ENCODE measurements at regions of chr18 and their contacts with region 1.

Region 1: DNA sequence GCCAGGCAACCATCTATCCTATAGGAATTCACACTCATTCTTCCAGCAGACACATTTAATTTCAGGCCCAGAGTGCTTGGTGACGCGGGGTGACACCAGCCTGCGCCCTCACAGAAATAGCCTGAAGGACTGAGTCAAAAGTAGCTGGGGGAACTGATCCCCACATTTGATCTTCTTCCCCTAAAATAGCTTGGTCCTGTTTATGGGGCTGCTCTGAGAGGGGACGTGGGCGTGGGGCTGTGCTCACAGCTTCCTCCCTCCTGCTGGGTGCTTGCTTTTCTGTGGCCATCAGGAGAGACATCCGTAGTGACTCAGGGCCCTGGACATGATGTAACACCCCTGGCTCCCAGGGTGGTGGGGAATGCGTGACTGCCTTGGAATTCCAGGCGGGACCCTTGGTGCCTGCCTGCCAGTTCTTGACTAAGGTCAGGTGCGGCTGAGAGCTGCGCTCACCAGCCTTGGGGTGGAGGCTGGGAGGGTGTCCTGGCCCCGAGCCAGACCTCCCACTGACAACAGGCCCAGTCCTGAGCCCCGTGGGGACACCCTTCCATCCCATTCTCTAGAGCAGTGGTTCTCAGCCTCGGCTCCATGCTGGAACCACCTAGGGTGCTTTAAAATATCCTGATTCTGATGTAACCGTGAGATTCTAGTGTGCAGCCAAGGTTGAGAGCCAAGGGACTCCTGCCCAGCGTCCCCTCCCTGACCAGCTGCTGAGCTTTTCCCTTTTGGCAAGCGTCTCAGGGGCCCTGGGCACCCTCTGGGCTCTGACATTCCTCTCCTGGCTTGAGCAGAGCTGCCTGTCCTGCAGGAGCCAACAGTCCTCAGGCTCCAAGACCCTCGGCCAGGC is 47.4 kb upstream of the SMAD7 start:
- DNase-seq: peak; percentile 97
- H3K4me3 Mint-ChIP-seq: peak overlapping the region; percentile 13
- H3K27ac Mint-ChIP-seq: peak overlapping the region; percentile 83
- H3K4me1 Mint-ChIP-seq: peaks cover 31% of the 10 kb centered on the region
- H3K27me3 Mint-ChIP-seq: no peaks in the 10 kb centered on the region
- CTCF ChIP-seq: no peak

Region 2: GRCh38 chr18:48975649-48976204 is 22.5 kb before region 1 on chr18:
- CTCF ChIA-PET with region 1: no interaction called
- POLR2A ChIA-PET with region 1: interaction called, 10 read pairs
- intact Hi-C with region 1: no loop called
- DNase-seq: peak; percentile 57
- H3K4me3 Mint-ChIP-seq: peak overlapping the region; percentile 30
- H3K27ac Mint-ChIP-seq: no peak overlapping the region
- H3K4me1 Mint-ChIP-seq: peaks cover 5% of the 10 kb centered on the region
- H3K27me3 Mint-ChIP-seq: no peaks in the 10 kb centered on the region
- CTCF ChIP-seq: no peak

Region 3: GRCh38 chr18:49094979-49095632 is 96.9 kb after region 1 on chr18:
- CTCF ChIA-PET with region 1: no interaction called
- POLR2A ChIA-PET with region 1: no interaction called
- intact Hi-C with region 1: loop called (anchors 1 kb)
- DNase-seq: peak; percentile 85
- H3K4me3 Mint-ChIP-seq: no peak overlapping the region
- H3K27ac Mint-ChIP-seq: peak overlapping the region; percentile 7
- H3K4me1 Mint-ChIP-seq: peaks cover 18% of the 10 kb centered on the region
- H3K27me3 Mint-ChIP-seq: no peaks in the 10 kb centered on the region
- CTCF ChIP-seq: no peak

Region 4: GRCh38 chr18:49878567-49879270 is 880.5 kb after region 1 on chr18:
- CTCF ChIA-PET with region 1: no interaction called
- POLR2A ChIA-PET with region 1: no interaction called
- intact Hi-C with region 1: no loop called
- DNase-seq: no peak
- H3K4me3 Mint-ChIP-seq: no peak overlapping the region
- H3K27ac Mint-ChIP-seq: no peak overlapping the region
- H3K4me1 Mint-ChIP-seq: no peaks in the 10 kb centered on the region
- H3K27me3 Mint-ChIP-seq: no peaks in the 10 kb centered on the region
- CTCF ChIP-seq: no peak